H1 (cell line): ENCODE measurements at regions of chr1 and their contacts with region 1.

Region 1: DNA sequence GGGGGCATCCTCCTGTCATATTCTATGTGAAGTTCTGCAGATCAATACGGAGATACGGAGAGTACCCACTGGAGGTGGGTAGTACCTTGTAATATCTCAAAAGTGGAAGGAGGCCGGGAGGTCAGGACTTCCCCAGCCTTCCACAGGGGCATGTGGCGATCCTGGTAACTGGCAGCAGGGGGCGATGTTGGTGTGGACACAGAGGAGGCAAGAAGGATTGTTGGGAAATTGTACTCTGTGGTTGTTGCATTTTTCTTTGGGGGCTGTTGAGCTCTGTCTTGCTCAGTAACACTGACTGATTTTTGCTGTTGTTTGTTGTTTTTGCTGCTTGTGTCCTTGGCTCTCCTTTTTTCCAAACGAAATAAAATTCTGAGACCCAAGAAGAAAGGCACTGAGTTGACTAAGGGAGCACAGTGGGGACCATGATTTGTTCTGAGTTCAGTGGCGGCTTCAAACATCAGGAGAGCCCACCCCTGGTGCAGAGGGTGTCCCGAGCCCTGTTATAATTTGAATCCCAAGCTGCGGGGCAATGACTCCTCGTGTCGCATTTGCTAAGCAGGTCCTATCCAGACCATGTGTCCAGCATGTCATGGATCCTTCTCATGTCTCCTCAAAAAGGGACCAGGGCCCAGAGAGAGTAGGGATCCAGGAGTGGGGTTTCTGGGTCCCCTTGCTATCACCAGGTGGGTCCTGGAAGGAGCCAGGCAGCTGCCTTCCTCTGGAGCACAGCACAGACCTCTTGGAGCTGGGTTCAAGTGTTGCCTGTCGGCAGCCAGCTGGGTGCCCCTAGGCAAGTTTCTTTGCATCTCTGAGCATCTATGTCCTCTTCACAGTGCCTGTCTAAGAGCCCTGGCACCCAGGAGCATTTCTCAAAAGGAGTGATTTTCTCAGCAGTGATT is 22.8 kb downstream of the LHX4 start:
- DNase-seq: peak in 1 of 2 experiments; percentile 98
- H3K4me3 ChIP-seq: no peak overlapping the region
- H3K27ac ChIP-seq: no peak overlapping the region
- H3K4me1 ChIP-seq: peaks cover 0 to 22% (median 12%) of the 10 kb centered on the region in 4 experiments; a peak in 6 of 7 replicates
- H3K27me3 ChIP-seq: no peaks in the 10 kb centered on the region; a peak in 1 of 7 replicates
- CTCF ChIP-seq: peak; percentile 95 to 98 (median 98)
- EP300 ChIP-seq: no peak
- POLR2A ChIP-seq: no peak
- RAD21 ChIP-seq: peak; percentile 92 to 94

Region 2: GRCh38 chr1:180198196-180198595 is 54.7 kb before region 1 on chr1:
- CTCF ChIA-PET with region 1: interaction called, 10 read pairs
- POLR2A ChIA-PET with region 1: no interaction called
- DNase-seq: no peak
- H3K4me3 ChIP-seq: no peak overlapping the region
- H3K27ac ChIP-seq: no peak overlapping the region
- H3K4me1 ChIP-seq: peaks cover 0 to 1% (median 0%) of the 10 kb centered on the region in 4 experiments; a peak in 1 of 7 replicates
- H3K27me3 ChIP-seq: no peaks in the 10 kb centered on the region
- CTCF ChIP-seq: no peak
- EP300 ChIP-seq: no peak
- POLR2A ChIP-seq: no peak
- RAD21 ChIP-seq: no peak

Region 3: GRCh38 chr1:180241716-180242526 is 11.0 kb before region 1 on chr1:
- CTCF ChIA-PET with region 1: interaction called, 18 read pairs
- POLR2A ChIA-PET with region 1: interaction called, 12 read pairs
- DNase-seq: no peak
- H3K4me3 ChIP-seq: no peak overlapping the region
- H3K27ac ChIP-seq: no peak overlapping the region
- H3K4me1 ChIP-seq: peaks cover 19 to 46% (median 30%) of the 10 kb centered on the region in 4 experiments
- H3K27me3 ChIP-seq: peaks cover 0 to 11% (median 7%) of the 10 kb centered on the region in 4 experiments; a peak in 6 of 7 replicates
- CTCF ChIP-seq: no peak
- EP300 ChIP-seq: no peak
- POLR2A ChIP-seq: no peak
- RAD21 ChIP-seq: no peak

Region 4: GRCh38 chr1:180343931-180344769 is 91.3 kb after region 1 on chr1:
- CTCF ChIA-PET with region 1: interaction called, 11 read pairs
- POLR2A ChIA-PET with region 1: interaction called, 3 read pairs
- DNase-seq: no peak
- H3K4me3 ChIP-seq: no peak overlapping the region
- H3K27ac ChIP-seq: no peak overlapping the region
- H3K4me1 ChIP-seq: no peaks in the 10 kb centered on the region
- H3K27me3 ChIP-seq: no peaks in the 10 kb centered on the region
- CTCF ChIP-seq: no peak
- EP300 ChIP-seq: no peak
- POLR2A ChIP-seq: no peak
- RAD21 ChIP-seq: no peak

Region 5: DNA sequence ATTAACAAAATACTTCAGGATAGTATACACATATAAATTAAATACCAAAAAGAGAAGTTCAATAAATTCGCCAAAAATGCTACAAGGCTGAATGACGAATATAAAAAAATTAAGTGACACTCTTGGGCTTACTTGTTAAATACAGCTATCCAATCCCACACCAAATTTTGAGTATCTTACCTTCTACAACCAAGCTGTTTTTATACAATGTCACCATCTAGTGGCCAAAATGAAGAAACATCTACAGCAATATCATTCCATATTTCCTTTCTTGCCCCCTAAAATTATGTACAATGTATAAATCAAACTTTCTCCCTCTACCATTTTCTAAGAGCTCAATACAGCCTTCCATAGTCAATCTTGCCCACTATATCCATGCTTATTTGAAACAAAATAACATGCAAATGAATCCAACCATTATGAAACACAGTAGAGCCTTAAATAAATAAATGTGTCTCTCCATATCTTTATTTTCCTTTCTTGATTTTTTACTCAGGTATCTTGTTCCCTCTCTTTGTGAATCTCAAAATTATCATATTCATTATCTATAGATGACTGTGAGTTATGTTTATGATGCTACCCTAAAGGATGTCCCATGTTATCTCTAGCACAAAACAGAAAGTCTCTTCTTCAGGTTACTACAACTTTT is 163.2 kb after region 1 on chr1:
- CTCF ChIA-PET with region 1: interaction called, 50 read pairs
- POLR2A ChIA-PET with region 1: no interaction called
- DNase-seq: no peak
- H3K4me3 ChIP-seq: no peak overlapping the region
- H3K27ac ChIP-seq: no peak overlapping the region
- H3K4me1 ChIP-seq: no peaks in the 10 kb centered on the region
- H3K27me3 ChIP-seq: no peaks in the 10 kb centered on the region
- CTCF ChIP-seq: peak in 2 of 3 experiments; percentile 39 to 63; a peak in 2 of 4 replicates
- EP300 ChIP-seq: no peak
- POLR2A ChIP-seq: no peak
- RAD21 ChIP-seq: peak; percentile 79 to 84

Region 6: DNA sequence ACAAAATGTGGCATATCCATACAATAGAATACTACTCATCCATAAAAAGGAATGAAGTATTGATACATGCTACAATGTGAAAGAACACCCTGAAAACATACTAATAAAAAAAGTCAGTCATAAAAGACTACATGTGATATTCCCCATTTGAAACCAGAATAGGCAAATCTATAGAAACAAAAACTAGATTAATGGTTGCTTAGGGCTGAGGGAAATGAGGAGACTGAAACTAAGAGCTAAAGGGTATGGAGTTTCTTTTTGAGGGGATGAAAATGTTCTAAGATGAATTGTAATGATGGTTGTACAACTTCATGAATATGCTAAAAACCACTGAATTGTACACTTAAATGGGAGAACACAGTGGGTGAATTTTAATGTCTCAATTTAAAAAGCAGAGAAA is 198.6 kb after region 1 on chr1:
- CTCF ChIA-PET with region 1: no interaction called
- POLR2A ChIA-PET with region 1: no interaction called
- DNase-seq: no peak
- H3K4me3 ChIP-seq: no peak overlapping the region
- H3K27ac ChIP-seq: no peak overlapping the region
- H3K4me1 ChIP-seq: no peaks in the 10 kb centered on the region
- H3K27me3 ChIP-seq: no peaks in the 10 kb centered on the region
- CTCF ChIP-seq: no peak
- EP300 ChIP-seq: no peak
- POLR2A ChIP-seq: no peak
- RAD21 ChIP-seq: no peak